ENCODE measurements at regions of chr17 and their contacts with region 1.

Region 1: GRCh38 chr17:45828628-45829027 is 16.1 kb upstream of the SPPL2C start:
- DNase-seq: no peak
- H3K4me3 ChIP-seq: no peak overlapping the region
- H3K27ac ChIP-seq: no peak overlapping the region
- H3K4me1 ChIP-seq: no peaks in the 10 kb centered on the region
- H3K27me3 ChIP-seq: peaks cover 0 to 25% (median 10%) of the 10 kb centered on the region in 3 donors
- CTCF ChIP-seq: no peak
- EP300 ChIP-seq: no peak
- POLR2A ChIP-seq: no peak

Region 2: DNA sequence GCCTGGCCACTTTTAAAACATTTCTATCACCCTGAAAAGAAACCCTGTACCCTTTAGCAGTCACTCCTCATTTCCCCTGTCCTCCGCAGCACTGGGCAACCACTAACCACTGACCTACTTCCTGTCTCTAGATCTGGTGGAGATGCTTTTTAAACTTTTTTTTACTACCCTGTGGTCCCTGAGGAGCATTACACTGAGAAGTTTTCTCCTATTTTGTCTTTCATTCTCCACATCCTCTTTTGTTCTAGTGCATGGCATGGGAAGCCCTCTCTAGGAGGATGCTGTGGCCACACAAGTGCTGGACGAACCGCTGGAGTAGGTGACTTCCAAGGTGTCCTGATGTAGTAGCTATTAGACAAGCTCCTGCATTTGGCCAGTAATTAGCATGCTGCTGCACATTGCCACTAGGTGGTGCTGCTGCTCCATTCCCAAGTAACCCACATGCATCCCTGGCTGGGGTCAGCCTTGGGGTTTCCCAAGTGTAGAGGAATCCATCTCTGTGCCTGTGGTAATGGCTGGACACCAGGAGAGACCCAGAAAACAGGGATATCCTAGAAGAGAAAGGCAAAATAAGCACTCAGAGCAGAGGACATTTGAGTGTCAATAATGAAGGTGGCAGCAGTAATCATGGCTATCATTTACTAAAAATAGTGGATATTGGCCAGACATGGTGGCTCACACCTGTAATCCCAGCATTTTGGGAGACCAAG is 188.3 kb before region 1 on chr17:
- intact Hi-C with region 1: loop called (anchors 1 kb)
- DNase-seq: peak; percentile 73
- H3K4me3 ChIP-seq: no peak overlapping the region
- H3K27ac ChIP-seq: no peak overlapping the region
- H3K4me1 ChIP-seq: no peaks in the 10 kb centered on the region
- H3K27me3 ChIP-seq: no peaks in the 10 kb centered on the region
- CTCF ChIP-seq: peak; percentile 71 to 97 (median 92)
- EP300 ChIP-seq: no peak
- POLR2A ChIP-seq: no peak

Region 3: DNA sequence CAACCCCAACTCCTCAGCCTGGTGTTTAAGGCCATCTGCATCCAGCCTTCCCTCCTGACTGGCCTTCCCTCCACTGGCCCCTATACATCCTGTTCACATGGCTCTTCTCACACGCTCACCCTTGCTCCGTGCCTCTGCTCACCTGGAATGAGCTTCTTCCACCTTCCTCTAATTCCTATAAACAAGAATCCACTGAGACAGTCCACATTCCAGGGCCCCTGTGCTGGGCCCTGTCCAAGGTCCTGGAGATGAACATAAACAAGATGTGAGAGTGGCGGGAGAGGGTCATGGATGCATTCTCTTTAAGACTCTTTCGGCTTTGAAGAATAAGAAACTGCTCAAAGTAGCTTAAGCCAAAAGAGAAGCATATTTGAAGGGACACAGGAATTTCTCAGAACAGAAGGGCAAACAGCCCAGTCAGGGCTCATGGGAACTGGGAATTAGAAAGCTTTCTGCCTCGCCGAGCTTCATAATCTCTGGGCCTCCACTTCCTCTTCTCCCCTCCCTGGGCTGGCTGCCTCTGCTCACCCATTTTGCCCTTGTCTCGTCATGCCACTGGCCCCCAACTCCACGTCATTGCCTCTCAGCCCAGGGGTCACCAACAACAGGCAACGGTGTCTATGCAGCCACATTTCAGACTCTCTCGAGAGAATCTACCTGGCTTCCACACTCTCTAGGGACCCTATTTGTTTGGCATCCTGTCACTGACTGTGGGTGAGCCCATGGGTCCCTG is 29.5 kb after region 1 on chr17:
- intact Hi-C with region 1: no loop called
- DNase-seq: no peak
- H3K4me3 ChIP-seq: no peak overlapping the region
- H3K27ac ChIP-seq: no peak overlapping the region
- H3K4me1 ChIP-seq: peaks cover 0 to 17% (median 2%) of the 10 kb centered on the region in 4 donors
- H3K27me3 ChIP-seq: peaks cover 0 to 4% (median 4%) of the 10 kb centered on the region in 3 donors
- CTCF ChIP-seq: no peak
- EP300 ChIP-seq: no peak
- POLR2A ChIP-seq: no peak